ENCODE measurements at regions of chr7 and their contacts with region 1.

Region 1: DNA sequence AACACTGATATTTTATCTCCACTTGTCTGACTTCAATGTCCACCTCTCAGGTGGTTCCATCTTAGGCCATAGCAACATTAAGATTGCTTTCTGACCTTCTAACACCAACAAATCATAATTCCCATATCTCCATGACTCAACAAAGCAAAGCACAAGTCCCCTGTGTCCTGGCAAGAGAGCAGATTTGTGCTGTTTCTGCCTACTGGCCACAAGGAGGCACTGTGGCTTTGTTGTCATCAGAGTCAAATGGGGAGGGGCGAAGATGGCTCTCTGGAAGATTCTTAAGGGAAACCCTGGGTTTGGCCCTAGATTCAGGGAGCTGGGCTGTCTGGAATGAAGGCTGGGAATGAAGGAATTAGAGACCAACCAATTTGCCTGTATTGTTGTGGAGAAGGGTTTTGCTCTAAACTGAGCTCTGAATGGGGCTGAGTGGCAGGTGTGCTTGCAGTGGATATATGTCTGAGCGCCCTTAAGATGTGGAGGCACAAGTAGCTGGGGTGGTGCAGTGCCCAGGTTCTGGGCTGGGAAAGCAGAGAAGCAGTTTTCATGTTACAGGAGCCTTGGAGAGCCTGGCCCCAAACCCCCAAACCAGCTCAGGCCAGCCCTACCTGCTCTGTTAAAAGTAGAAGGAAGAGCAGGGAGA is 154.8 kb upstream of the PRSS58 start:
- DNase-seq: peak; percentile 51
- H3K4me3 Mint-ChIP-seq: no peak overlapping the region
- H3K27ac Mint-ChIP-seq: no peak overlapping the region
- H3K4me1 Mint-ChIP-seq: no peaks in the 10 kb centered on the region
- H3K27me3 Mint-ChIP-seq: no peaks in the 10 kb centered on the region

Region 2: DNA sequence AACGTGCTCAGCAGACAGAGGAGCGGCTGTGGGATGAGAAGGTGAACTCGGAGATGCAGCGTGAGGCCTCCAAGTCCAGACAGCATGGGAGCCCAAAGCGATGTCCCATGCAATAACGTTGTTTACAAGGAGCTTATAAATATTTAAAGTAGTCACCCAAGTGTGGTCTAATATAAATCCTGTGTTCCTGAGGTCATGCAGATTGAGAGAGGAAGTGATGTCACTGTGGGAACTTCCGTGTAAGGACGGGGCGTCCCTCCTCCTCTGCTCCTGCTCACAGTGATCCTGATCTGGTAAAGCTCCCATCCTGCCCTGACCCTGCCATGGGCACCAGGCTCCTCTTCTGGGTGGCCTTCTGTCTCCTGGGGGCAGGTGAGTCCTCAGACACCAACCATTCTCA is 60.1 kb before region 1 on chr7:
- CTCF ChIA-PET with region 1: no interaction called
- POLR2A ChIA-PET with region 1: no interaction called
- intact Hi-C with region 1: no loop called
- DNase-seq: peak; percentile 47
- H3K4me3 Mint-ChIP-seq: peak overlapping the region; percentile 74
- H3K27ac Mint-ChIP-seq: peak overlapping the region; percentile 81
- H3K4me1 Mint-ChIP-seq: peaks cover 31% of the 10 kb centered on the region
- H3K27me3 Mint-ChIP-seq: no peaks in the 10 kb centered on the region

Region 3: DNA sequence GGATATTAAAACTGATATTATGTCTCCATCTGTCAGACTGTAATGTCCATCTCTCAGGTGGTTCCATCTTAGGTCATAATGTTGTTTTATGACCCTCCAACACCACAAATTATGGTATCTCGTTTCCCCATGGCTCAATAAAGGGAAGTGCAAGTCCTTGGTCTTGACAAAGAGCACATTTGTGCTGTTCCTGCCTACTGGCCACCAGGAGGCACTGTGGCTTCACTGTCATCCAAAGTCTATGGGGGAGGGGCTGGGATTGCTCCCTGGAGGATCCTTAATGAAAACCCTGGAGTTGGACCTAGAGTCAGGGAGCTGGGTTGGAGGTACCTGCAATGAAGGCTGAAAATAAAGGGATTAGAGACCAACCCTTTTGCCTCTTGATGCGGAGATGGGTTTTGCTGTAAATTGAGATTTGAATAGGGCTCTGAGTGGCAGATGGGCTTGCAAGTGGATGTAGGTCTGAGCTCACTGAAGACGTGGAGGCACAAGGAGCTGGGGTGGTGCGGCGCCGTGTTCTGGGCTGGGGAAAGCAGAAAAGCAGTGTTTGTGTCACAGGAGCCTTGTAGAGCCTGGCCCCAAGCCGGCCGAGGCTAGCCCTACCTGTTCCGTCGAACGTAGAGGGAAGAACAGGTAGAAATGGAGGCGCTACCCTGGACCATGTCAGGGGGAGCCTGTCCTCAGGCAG is 25.7 kb after region 1 on chr7:
- CTCF ChIA-PET with region 1: interaction called, 11 read pairs
- POLR2A ChIA-PET with region 1: no interaction called
- intact Hi-C with region 1: no loop called
- DNase-seq: peak; percentile 45
- H3K4me3 Mint-ChIP-seq: no peak overlapping the region
- H3K27ac Mint-ChIP-seq: no peak overlapping the region
- H3K4me1 Mint-ChIP-seq: peaks cover 55% of the 10 kb centered on the region
- H3K27me3 Mint-ChIP-seq: no peaks in the 10 kb centered on the region

Measured in activated CD4-positive, alpha-beta memory T cell treated with anti-CD3 and anti-CD28 coated beads for 36 hours (primary cell).